ENCODE measurements at regions of chr18 and their contacts with region 1.

Region 1: DNA sequence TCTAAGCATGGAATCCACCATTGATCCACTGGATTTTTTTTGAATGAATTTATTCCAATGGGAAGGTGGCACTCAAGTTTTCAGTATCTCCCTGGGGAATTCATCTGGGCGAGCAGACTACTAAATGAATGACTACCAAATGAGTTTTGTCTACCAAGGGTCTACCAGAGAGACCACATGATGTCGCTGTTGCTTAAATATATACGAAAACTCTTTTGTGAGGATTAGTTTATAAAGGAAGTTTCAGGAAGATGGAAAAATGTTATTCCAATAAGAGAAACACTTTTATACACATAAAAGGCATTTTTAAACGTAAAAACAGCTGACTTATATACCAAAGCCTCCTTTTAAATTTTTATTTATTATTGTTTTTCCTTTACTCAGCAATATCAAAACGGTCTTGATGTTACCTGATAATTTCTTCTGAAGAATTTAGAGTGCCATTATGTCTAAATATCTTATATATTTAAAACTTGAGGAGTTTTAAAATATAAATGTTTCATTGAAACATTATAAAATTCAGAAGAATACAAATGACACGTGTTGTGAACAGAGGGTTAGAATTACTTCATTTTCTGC is 139.7 kb downstream of the HRH4 start:
- DNase-seq: no peak
- ATAC-seq: no peak

Region 2: DNA sequence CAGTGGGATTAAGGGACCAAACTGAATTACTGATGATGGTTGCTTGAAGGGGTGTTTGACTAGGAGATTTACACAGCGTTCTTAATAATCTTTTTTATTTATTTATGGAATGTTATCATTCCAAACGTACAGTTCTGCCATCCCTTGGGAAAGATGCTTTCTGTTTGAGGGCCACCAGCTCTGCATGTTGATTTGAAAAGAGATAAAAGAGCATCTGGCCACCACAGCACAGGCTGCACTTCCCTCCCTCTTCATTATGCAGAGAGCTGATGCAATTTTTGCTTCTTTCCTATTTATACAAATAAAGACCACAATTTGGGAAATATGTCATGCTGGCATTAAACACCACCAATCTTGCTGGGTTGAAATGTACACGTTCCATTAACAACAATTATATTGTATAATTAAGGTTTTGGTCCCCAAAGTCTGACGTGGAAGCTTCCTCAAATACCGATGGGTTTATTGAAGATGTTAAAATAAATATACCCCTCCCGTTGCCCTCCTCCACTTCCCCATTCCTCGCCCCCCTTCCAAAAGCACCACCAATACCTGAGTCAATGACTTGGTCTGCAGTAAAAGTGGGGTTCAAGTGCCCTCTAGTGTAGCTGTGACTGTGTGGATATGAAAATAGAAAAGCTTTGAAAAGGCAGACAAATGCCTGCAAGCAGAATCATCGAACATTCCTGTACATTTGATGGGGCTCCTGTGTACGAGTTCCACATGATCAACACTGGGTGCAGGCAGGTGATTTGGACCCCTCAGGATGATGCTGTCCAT is 72.2 kb after region 1 on chr18:
- intact Hi-C with region 1: loop called (anchors 5 kb)
- DNase-seq: no peak
- ATAC-seq: no peak

Region 3: GRCh38 chr18:24726727-24727492 is 126.7 kb after region 1 on chr18:
- intact Hi-C with region 1: loop called (anchors 1 kb)
- DNase-seq: no peak
- ATAC-seq: peak; percentile 57